CD8-positive, alpha-beta T cell (primary cell): ENCODE measurements at regions of chr5 and their contacts with region 1.

Region 1: DNA sequence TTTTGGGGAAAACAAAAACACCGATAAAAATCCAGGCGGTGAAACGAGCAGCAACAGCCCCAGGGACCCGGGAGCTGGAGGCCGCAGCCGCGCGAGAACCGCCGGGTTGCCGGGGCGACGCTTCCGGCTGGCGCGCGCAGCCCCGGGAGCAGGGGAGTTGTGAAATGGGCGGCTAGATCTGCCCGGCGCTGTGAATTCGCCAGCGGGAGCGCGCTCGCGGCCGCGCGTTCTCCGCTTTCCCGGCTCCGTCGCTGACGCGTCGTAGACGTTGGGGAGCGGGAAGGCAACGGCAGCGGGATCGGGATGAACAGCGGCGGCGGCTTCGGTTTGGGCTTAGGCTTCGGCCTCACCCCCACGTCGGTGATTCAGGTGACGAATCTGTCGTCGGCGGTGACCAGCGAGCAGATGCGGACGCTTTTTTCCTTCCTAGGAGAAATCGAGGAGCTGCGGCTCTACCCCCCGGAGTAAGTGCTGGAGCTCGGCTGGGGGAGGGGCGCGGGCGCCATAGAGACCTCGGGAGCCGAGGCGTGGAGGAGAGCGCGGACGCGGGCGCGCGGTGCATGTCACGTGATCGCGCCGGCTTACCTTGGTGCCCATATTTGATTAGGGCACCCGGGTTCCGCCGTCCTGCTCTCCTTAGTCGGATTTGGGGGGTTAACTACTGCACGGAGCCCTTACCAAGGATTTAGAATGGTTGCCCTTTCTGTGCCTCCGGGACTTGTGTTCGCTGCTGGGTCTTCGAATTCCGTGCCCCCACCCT is at the start of gene SREK1:
- DNase-seq: peak; percentile 74 to 94 (median 87)
- ATAC-seq: peak; percentile 84
- H3K4me3 ChIP-seq: peak within 1 kb of the TSS; percentile 94 to 98
- H3K4me3 Mint-ChIP-seq: peak within 1 kb of the TSS; percentile 99
- H3K27ac ChIP-seq: peak within 1 kb of the TSS; percentile 94 to 99
- H3K27ac Mint-ChIP-seq: peak within 1 kb of the TSS; percentile 100
- H3K4me1 ChIP-seq: peaks cover 43% of the 10 kb centered on the region
- H3K4me1 Mint-ChIP-seq: peaks cover 46% of the 10 kb centered on the region
- H3K27me3 ChIP-seq: no peaks in the 10 kb centered on the region
- H3K27me3 Mint-ChIP-seq: no peaks in the 10 kb centered on the region
- CTCF ChIP-seq: no peak
- total RNA-seq, gene SREK1: 152 to 154 TPM

Region 2: GRCh38 chr5:64768358-64769312 is 1375.6 kb before region 1 on chr5 and contains the starts of genes CWC27 and SREK1IP1:
- CTCF ChIA-PET with region 1: no interaction called
- POLR2A ChIA-PET with region 1: no interaction called
- intact Hi-C with region 1: loop called (anchors 2 to 5 kb)
- DNase-seq: peak; percentile 63 to 92 (median 80)
- ATAC-seq: peak; percentile 96
- H3K4me3 ChIP-seq: peak within 1 kb of the TSS; percentile 78 to 93
- H3K4me3 Mint-ChIP-seq: peak within 1 kb of the TSS; percentile 100
- H3K27ac ChIP-seq: peak within 1 kb of the TSS; percentile 85 to 90
- H3K27ac Mint-ChIP-seq: peak within 1 kb of the TSS; percentile 97
- H3K4me1 ChIP-seq: peaks cover 39% of the 10 kb centered on the region
- H3K4me1 Mint-ChIP-seq: peaks cover 66% of the 10 kb centered on the region
- H3K27me3 ChIP-seq: no peaks in the 10 kb centered on the region
- H3K27me3 Mint-ChIP-seq: no peaks in the 10 kb centered on the region
- CTCF ChIP-seq: no peak
- total RNA-seq, gene CWC27: 15.5 to 16.6 TPM
- total RNA-seq, gene SREK1IP1: 20.4 to 26.5 TPM

Region 3: GRCh38 chr5:65624571-65625555 is 519.4 kb before region 1 on chr5 and contains the starts of genes SHLD3 and TRAPPC13:
- CTCF ChIA-PET with region 1: no interaction called
- POLR2A ChIA-PET with region 1: interaction called, 5 read pairs
- intact Hi-C with region 1: loop called (anchors 1 to 2 kb)
- DNase-seq: peak; percentile 70 to 96 (median 83)
- ATAC-seq: peak; percentile 72
- H3K4me3 ChIP-seq: peak within 1 kb of the TSS; percentile 80 to 84
- H3K4me3 Mint-ChIP-seq: peak within 1 kb of the TSS; percentile 97
- H3K27ac ChIP-seq: peak within 1 kb of the TSS; percentile 78 to 91
- H3K27ac Mint-ChIP-seq: peak within 1 kb of the TSS; percentile 99
- H3K4me1 ChIP-seq: peaks cover 26% of the 10 kb centered on the region
- H3K4me1 Mint-ChIP-seq: peaks cover 56% of the 10 kb centered on the region
- H3K27me3 ChIP-seq: no peaks in the 10 kb centered on the region
- H3K27me3 Mint-ChIP-seq: no peaks in the 10 kb centered on the region
- CTCF ChIP-seq: no peak
- total RNA-seq, gene SHLD3: 11.6 to 14.5 TPM
- total RNA-seq, gene TRAPPC13: 11.9 to 17.6 TPM

Region 4: GRCh38 chr5:65760504-65761275 is 383.6 kb before region 1 on chr5:
- CTCF ChIA-PET with region 1: interaction called, 3 read pairs
- POLR2A ChIA-PET with region 1: interaction called, 3 read pairs
- intact Hi-C with region 1: loop called in 1 of 2 experiments (anchors 1 kb)
- DNase-seq: peak; percentile 27 to 83 (median 58)
- ATAC-seq: peak; percentile 99
- H3K4me3 ChIP-seq: no peak overlapping the region
- H3K4me3 Mint-ChIP-seq: no peak overlapping the region
- H3K27ac ChIP-seq: no peak overlapping the region
- H3K27ac Mint-ChIP-seq: no peak overlapping the region
- H3K4me1 ChIP-seq: peaks cover 8% of the 10 kb centered on the region
- H3K4me1 Mint-ChIP-seq: peaks cover 3% of the 10 kb centered on the region
- H3K27me3 ChIP-seq: no peaks in the 10 kb centered on the region
- H3K27me3 Mint-ChIP-seq: no peaks in the 10 kb centered on the region
- CTCF ChIP-seq: peak; percentile 74

Region 5: GRCh38 chr5:66074901-66075300 is 69.4 kb before region 1 on chr5:
- CTCF ChIA-PET with region 1: no interaction called
- POLR2A ChIA-PET with region 1: no interaction called
- intact Hi-C with region 1: loop called (anchors 5 kb)
- DNase-seq: no peak
- ATAC-seq: no peak
- H3K4me3 ChIP-seq: no peak overlapping the region
- H3K4me3 Mint-ChIP-seq: no peak overlapping the region
- H3K27ac ChIP-seq: no peak overlapping the region
- H3K27ac Mint-ChIP-seq: no peak overlapping the region
- H3K4me1 ChIP-seq: no peaks in the 10 kb centered on the region
- H3K4me1 Mint-ChIP-seq: peaks cover 14% of the 10 kb centered on the region
- H3K27me3 ChIP-seq: no peaks in the 10 kb centered on the region
- H3K27me3 Mint-ChIP-seq: no peaks in the 10 kb centered on the region
- CTCF ChIP-seq: no peak

Region 6: DNA sequence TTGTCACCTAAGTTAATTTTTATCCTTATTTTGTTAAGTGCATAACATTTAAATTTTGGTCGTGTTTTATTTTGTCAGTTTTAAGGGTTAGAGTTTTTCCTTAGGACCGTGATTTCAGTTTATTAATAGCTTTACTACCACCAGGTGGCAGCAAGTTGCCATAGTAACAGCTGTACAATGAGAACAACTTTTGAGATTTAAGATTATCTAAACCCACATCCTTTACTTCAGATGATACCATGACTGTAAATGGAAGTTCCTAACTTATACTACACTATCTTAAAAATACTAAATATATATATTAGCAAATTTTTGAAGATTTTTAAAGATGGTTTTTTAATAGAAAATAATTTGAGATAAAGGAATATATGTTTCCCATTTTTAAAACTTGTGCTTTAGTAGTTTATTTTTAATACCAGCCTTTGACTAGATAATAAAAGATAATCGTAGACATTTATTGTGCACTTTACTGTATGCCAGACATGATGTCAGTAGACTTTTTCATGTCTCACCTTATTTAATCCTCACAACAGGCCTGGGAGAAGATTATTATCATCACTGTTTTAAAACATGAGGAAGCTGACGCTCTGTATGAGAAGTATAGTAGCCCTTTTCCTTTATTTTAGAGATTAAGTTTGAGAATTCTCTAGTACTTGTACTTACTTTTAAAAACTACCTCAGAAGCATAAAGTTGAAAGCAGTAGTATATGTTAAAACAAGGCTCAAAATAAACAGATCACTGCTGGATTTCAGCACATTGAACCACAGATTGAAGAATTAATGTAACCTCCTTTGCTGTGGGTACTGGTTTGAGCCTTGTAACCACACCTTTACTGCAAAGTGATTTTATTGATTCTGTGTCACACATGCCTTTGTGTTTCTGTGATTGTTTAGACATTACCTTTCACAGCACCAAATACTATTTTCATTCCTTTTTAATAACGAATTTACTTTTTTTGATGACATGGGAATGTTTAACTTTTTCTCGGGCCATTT is 27.4 kb after region 1 on chr5:
- CTCF ChIA-PET with region 1: no interaction called
- POLR2A ChIA-PET with region 1: no interaction called
- intact Hi-C with region 1: loop called in 1 of 2 experiments (anchors 1 kb)
- DNase-seq: peak in 8 of 9 experiments; percentile 31 to 84 (median 60)
- ATAC-seq: peak; percentile 83
- H3K4me3 ChIP-seq: no peak overlapping the region
- H3K4me3 Mint-ChIP-seq: no peak overlapping the region
- H3K27ac ChIP-seq: peak overlapping the region; percentile 4 to 16
- H3K27ac Mint-ChIP-seq: peak overlapping the region; percentile 15
- H3K4me1 ChIP-seq: peaks cover 7% of the 10 kb centered on the region
- H3K4me1 Mint-ChIP-seq: peaks cover 18% of the 10 kb centered on the region
- H3K27me3 ChIP-seq: no peaks in the 10 kb centered on the region
- H3K27me3 Mint-ChIP-seq: no peaks in the 10 kb centered on the region
- CTCF ChIP-seq: peak; percentile 66